Mammary epithelial cell (primary cell): ENCODE measurements at regions of chr9 and their contacts with region 1.

Region 1: GRCh38 chr9:2857564-2858198 is 13.8 kb upstream of the PUM3 start:
- DNase-seq: peak; percentile 54
- H3K4me3 ChIP-seq: no peak overlapping the region
- H3K27ac ChIP-seq: no peak overlapping the region
- H3K4me1 ChIP-seq: no peaks in the 10 kb centered on the region
- H3K27me3 ChIP-seq: peaks cover 4% of the 10 kb centered on the region
- CTCF ChIP-seq: peak; percentile 82 to 94

Region 2: GRCh38 chr9:2610985-2611384 is 246.7 kb before region 1 on chr9:
- CTCF ChIA-PET with region 1: no interaction called
- dilution Hi-C with region 1: no loop called
- in situ Hi-C with region 1: no loop called
- intact Hi-C with region 1: no loop called
- DNase-seq: no peak
- H3K4me3 ChIP-seq: no peak overlapping the region
- H3K27ac ChIP-seq: no peak overlapping the region
- H3K4me1 ChIP-seq: no peaks in the 10 kb centered on the region
- H3K27me3 ChIP-seq: no peaks in the 10 kb centered on the region
- CTCF ChIP-seq: no peak

Region 3: DNA sequence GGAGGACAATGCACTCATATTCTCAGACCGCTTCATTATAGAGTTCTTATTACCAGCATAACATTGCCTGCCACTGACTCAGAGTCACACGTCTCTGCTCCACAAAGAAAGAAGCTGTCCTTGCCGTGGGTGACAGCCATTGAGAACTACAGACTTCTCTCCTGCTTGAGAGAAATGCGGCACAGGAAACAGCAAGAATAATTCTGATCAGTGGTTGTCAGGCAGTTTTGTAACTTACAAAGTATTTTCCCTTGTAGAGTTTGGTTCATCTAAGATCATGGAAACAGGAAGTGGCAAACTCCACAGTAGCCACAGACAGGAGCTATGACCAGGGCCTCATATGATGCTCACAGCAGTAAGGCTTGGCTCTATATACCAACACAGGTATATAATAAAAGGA is 93.3 kb before region 1 on chr9:
- CTCF ChIA-PET with region 1: no interaction called
- dilution Hi-C with region 1: no loop called
- in situ Hi-C with region 1: no loop called
- intact Hi-C with region 1: no loop called
- DNase-seq: no peak
- H3K4me3 ChIP-seq: no peak overlapping the region
- H3K27ac ChIP-seq: no peak overlapping the region
- H3K4me1 ChIP-seq: no peaks in the 10 kb centered on the region
- H3K27me3 ChIP-seq: no peaks in the 10 kb centered on the region
- CTCF ChIP-seq: no peak

Region 4: GRCh38 chr9:2816476-2817141 is 41.1 kb before region 1 on chr9:
- CTCF ChIA-PET with region 1: no interaction called
- dilution Hi-C with region 1: no loop called
- in situ Hi-C with region 1: no loop called
- intact Hi-C with region 1: no loop called
- DNase-seq: no peak
- H3K4me3 ChIP-seq: no peak overlapping the region
- H3K27ac ChIP-seq: no peak overlapping the region
- H3K4me1 ChIP-seq: no peaks in the 10 kb centered on the region
- H3K27me3 ChIP-seq: no peaks in the 10 kb centered on the region
- CTCF ChIP-seq: no peak

Region 5: DNA sequence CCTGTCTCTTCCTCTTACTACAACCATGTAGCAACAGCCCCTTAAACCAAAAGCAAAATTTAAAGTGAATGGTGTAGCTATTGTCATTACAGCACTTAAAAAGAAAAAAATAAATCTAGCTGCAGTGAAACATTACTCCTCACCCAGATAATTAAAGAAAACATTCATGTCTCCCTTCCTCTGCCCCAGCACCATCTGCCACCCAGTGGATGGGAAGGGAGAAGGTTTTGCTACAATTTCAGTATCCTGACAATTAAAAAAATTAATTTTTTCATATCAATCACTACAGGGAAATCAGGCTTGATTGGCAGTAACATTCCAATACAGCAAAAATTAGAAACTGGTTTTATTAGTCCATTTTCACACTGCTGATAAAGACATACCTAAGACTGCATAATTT is 133.6 kb after region 1 on chr9:
- CTCF ChIA-PET with region 1: no interaction called
- dilution Hi-C with region 1: no loop called
- in situ Hi-C with region 1: no loop called
- intact Hi-C with region 1: loop called (anchors 1 kb)
- DNase-seq: no peak
- H3K4me3 ChIP-seq: no peak overlapping the region
- H3K27ac ChIP-seq: no peak overlapping the region
- H3K4me1 ChIP-seq: no peaks in the 10 kb centered on the region
- H3K27me3 ChIP-seq: no peaks in the 10 kb centered on the region
- CTCF ChIP-seq: peak; percentile 10 to 34

Region 6: DNA sequence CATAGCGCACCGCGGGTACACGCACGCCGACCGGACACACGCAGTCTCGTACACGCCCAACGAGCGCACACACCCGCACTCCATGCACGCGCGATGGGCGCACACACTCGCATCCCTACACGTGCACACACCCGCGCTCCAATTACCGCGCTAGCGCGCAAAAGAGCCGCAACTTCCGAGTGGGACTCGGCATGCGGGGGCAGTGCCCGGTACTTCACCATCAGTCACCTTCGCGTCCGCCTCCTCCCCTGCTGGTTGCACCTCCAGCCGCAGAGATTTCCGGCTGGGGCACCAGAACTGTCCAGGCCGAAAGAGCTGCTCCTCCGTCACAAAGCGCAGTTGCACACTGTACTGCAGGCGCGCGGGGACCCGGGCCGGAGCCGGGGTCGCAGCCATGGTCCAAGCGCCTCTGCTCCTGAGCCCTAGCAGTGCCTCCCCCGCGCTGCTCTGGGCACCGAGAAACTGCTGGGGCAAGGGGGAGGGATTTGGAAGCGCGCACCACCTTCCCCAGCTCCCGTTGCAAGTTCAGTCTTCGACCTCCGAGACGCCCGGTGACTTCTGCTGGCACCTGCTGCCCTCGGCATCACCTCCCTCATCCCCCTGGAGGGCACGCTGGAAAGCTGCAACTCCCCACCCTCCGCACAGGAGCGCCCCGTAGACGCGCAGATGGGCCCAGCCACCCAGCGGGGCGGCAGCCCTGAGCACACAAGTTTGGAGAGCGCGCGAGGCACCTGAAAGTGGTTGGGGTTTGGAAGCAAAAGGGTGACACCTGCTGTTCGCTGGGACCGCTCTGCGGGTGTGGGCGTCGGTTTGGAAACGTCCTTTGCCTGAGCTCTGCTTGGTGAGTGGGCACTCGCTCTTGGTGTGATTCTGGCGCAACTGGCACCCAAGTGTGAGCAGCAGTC is 323.6 kb after region 1 on chr9:
- CTCF ChIA-PET with region 1: no interaction called
- dilution Hi-C with region 1: no loop called
- in situ Hi-C with region 1: loop called in 1 of 2 experiments (anchors 10 kb)
- intact Hi-C with region 1: loop called (anchors 1 kb)
- DNase-seq: peak; percentile 60
- H3K4me3 ChIP-seq: peak overlapping the region in 2 of 3 experiments; percentile 24 to 26
- H3K27ac ChIP-seq: no peak overlapping the region
- H3K4me1 ChIP-seq: no peaks in the 10 kb centered on the region
- H3K27me3 ChIP-seq: peaks cover 20% of the 10 kb centered on the region
- CTCF ChIP-seq: peak; percentile 38 to 68

Region 7: DNA sequence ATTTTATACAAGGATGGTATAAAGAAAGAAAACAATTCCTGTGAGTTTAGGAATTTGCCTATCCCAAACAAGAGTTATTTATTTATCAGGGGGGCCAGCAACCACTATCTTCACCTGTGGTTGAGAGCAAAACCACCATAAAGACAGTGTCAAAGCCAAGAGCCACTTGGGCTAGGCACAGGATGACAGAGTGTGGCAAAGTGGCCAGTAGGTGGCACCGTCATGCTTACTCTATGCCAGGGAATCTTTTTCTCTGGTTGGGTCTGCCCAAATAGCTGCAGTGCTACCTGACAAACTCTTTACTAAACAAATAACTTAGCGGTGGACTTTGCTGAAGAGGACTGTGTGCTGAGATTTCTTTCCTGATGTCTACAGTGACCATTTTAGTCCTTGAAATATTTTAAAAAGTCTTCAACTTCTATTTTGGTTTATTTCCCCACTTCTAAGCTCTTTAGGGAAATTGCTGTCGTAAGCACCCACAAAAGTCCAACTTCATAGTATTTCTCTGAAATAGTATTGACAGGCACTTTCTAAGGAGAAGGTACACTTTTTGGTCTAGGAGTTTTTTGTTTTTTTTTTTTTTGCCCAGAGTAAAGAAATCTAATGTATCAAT is 383.1 kb after region 1 on chr9:
- CTCF ChIA-PET with region 1: no interaction called
- dilution Hi-C with region 1: no loop called
- in situ Hi-C with region 1: no loop called
- intact Hi-C with region 1: loop called (anchors 5 kb)
- DNase-seq: peak; percentile 52
- H3K4me3 ChIP-seq: no peak overlapping the region
- H3K27ac ChIP-seq: no peak overlapping the region
- H3K4me1 ChIP-seq: no peaks in the 10 kb centered on the region
- H3K27me3 ChIP-seq: no peaks in the 10 kb centered on the region
- CTCF ChIP-seq: peak; percentile 85 to 90

Region 8: DNA sequence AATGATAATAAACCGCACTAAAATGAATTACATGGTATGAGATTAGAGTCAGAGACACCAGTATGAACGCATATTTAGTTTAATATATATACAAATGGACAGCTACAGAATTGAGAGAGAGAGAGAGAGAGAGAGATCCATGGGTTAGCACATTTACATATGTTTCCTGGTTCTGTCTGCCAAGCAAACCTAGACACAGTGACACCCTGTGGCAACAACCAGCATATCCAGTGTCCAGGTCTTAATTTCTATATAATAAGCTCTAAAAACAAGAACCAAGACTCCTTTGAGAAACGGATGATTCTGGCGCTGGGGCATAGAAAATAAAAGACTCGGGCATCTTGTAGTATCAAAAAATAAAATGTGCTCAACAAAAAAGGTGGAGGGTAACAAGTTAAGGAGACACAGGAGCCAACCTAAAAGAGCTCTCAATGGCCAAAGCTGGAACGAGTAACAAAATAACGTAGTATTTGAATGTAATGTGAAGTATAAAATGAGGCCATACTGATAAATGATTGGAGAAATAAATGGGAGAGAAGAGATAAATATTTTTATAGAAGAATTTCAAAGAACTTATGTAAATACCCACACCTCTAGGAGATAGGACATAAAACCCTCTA is 583.6 kb after region 1 on chr9:
- CTCF ChIA-PET with region 1: no interaction called
- dilution Hi-C with region 1: no loop called
- in situ Hi-C with region 1: loop called (anchors 25 kb)
- intact Hi-C with region 1: loop called (anchors 5 kb)
- DNase-seq: peak; percentile 45
- H3K4me3 ChIP-seq: no peak overlapping the region
- H3K27ac ChIP-seq: no peak overlapping the region
- H3K4me1 ChIP-seq: no peaks in the 10 kb centered on the region
- H3K27me3 ChIP-seq: no peaks in the 10 kb centered on the region
- CTCF ChIP-seq: peak; percentile 73 to 74

Region 9: GRCh38 chr9:3525836-3526164 is 668.1 kb after region 1 on chr9 and contains the start of gene RFX3:
- CTCF ChIA-PET with region 1: no interaction called
- dilution Hi-C with region 1: no loop called
- in situ Hi-C with region 1: no loop called
- intact Hi-C with region 1: loop called (anchors 5 kb)
- DNase-seq: peak; percentile 94
- H3K4me3 ChIP-seq: peak within 1 kb of the TSS; percentile 92 to 100 (median 98)
- H3K27ac ChIP-seq: peak within 1 kb of the TSS; percentile 99
- H3K4me1 ChIP-seq: peaks cover 8% of the 10 kb centered on the region
- H3K27me3 ChIP-seq: no peaks in the 10 kb centered on the region
- CTCF ChIP-seq: no peak
- total RNA-seq, gene RFX3: 2.3 to 7.9 TPM